HEK293 (cell line): ENCODE measurements at regions of chrX and their contacts with region 1.

Region 1: GRCh38 chrX:23616361-23616760 is 50.9 kb upstream of the PRDX4 start:
- H3K4me3 ChIP-seq: no peak overlapping the region
- H3K27ac ChIP-seq: no peak overlapping the region
- H3K4me1 ChIP-seq: no peaks in the 10 kb centered on the region
- CTCF ChIP-seq: no peak

Region 2: GRCh38 chrX:23436875-23437274 is 179.5 kb before region 1 on chrX:
- CTCF ChIA-PET with region 1: no interaction called
- POLR2A ChIA-PET with region 1: no interaction called
- H3K4me3 ChIP-seq: no peak overlapping the region
- H3K27ac ChIP-seq: no peak overlapping the region
- H3K4me1 ChIP-seq: no peaks in the 10 kb centered on the region
- CTCF ChIP-seq: no peak

Region 3: DNA sequence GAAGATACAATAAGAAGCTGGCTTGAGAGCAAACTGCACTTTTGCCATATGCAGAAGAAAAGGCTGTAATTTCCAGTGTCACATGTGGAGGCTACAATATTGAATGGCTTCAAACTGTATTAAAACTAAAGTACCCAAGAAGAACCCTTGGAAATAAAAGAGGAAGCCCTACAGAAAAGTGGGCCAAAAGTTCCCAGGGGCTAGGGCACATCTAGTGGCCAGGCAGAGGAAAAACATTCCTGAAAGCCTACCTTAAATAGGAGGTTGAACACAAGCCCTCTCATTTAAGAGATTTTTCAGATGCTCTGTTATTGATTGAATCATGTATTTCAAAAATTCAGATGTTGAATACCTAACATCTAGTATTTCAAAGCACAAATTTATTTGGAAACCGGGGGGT is 10.3 kb after region 1 on chrX:
- CTCF ChIA-PET with region 1: interaction called, 19 read pairs
- POLR2A ChIA-PET with region 1: no interaction called
- H3K4me3 ChIP-seq: no peak overlapping the region
- H3K27ac ChIP-seq: no peak overlapping the region
- H3K4me1 ChIP-seq: no peaks in the 10 kb centered on the region
- CTCF ChIP-seq: no peak